HEK293T (cell line): ENCODE measurements at regions of chr18 and their contacts with region 1.

Region 1: GRCh38 chr18:59899298-59900221 is at the start of gene PMAIP1:
- DNase-seq: peak; percentile 74

Region 2: DNA sequence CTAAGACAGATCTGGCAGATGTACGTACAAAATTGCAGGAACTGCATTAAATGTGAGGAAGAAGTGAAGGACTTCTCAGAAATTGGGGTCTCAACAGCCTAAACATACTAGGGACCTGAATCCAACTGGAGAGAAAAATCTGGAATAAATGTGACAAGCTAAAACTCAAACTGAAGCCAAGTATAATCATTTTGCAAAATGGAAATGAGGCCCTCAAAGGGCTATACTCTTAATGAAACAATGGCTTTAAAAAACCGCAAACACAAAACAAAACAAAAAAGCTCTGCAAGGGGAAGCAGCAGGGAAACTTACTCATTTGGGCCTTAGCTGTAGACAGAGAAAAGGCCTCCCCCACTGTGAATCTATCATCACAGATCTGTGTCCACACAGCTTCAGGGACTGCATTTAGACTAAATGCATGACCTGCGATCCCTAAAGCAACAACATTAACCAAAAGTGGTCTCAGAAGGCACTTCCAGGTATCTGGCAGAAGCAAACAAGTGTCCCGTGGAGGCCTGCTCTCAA is 265.5 kb before region 1 on chr18:
- CTCF ChIA-PET with region 1: no interaction called
- POLR2A ChIA-PET with region 1: no interaction called
- DNase-seq: no peak

Region 3: GRCh38 chr18:59779966-59780365 is 119.6 kb before region 1 on chr18:
- CTCF ChIA-PET with region 1: no interaction called
- POLR2A ChIA-PET with region 1: no interaction called
- DNase-seq: no peak

Region 4: DNA sequence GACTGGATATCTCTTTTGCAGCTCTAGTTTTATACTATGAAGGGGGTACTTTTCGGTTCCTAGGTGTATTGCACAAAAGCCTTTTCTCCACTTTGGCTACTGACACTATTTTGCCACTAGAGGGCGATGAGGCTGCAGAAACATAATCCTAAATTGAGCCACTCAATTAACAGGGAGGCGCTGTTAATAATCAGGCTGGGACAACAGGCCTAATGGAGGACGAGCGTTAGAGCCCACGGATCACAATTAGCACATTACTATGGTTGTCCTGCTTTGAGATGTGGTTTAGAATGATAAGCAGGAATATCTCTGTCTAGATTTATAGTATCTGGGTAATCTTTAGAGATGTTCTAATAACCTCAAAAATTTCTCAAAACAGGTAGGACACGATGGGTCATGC is 62.0 kb before region 1 on chr18:
- CTCF ChIA-PET with region 1: interaction called, 3 read pairs
- POLR2A ChIA-PET with region 1: interaction called, 110 read pairs
- DNase-seq: peak; percentile 50

Region 5: DNA sequence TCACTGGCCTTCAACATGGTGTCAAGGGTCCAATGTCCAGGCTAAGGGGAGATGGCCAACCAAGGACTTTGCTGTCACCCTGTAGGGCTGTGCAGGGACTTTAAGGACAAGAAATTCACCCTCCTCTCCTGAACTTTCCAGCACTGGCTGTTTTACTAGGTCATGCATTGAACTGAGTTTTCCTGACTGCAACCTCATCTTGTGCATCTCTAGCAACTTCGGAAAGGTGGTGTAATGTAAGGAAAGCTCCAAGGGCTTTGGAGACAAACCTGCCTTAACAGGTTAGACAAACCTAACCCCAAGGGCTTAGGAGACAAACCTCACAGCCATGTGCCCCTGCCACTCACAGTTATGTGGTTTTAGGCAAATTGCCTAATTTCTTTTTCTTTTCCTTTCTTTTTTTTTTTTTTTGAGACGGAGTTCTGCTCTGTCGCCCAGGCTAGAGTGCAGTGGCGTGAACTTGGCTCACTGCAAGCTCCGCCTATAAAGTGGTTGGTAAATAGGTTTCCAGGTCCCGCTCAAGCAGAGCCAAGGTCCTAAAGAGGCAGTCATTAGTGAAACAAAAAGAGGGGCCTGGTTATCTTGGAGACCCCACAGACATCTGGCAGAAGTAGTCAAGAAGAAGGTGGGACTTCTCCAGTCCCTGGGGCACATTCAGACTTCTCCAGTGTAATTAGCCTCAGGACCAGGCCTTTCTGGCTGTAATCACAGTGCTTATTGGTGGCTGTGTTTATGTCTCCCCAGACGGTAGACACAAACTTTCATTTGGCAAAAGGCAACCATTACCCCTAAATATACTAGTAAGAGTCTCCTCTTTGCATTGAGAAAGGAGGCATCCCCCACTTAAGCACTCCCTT is 37.4 kb before region 1 on chr18:
- CTCF ChIA-PET with region 1: no interaction called
- POLR2A ChIA-PET with region 1: interaction called, 18 read pairs
- DNase-seq: no peak

Region 6: DNA sequence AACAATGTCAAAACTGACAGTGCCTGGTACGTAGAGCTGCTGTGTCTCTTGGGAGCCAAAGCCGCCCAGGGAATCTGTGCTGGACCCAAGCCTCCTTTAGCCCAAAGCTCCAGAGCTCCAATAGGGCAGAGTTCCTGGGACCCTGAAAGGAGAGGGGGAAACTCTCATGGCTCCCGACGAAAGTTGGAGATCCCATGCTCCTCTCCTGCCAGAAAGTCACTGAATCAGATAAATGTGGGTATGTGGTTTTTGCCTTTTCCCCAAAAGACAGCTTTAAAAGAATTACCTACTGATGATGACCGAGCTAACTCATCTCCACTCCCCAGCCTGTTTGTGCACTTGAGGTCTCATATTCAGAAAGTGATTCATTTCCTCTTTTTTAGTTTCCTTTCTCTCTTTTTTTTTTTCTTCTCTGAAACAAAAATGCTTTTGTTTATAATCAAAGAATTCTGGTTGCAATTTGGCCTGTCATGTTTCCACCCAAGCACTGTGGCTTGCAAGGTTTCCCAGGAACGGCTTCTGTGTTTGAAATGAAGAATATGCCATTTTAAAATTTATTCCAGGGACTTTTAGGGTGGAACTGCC is 13.9 kb before region 1 on chr18:
- CTCF ChIA-PET with region 1: no interaction called
- POLR2A ChIA-PET with region 1: interaction called, 77 read pairs
- DNase-seq: no peak

Region 7: GRCh38 chr18:59957971-59958595 is 58.5 kb after region 1 on chr18:
- CTCF ChIA-PET with region 1: no interaction called
- POLR2A ChIA-PET with region 1: interaction called, 14 read pairs
- DNase-seq: peak; percentile 28

Region 8: GRCh38 chr18:59971871-59972428 is 72.4 kb after region 1 on chr18:
- CTCF ChIA-PET with region 1: no interaction called
- POLR2A ChIA-PET with region 1: no interaction called
- DNase-seq: no peak